Caco-2 (cell line): ENCODE measurements at regions of chr3 and their contacts with region 1.

Region 1: DNA sequence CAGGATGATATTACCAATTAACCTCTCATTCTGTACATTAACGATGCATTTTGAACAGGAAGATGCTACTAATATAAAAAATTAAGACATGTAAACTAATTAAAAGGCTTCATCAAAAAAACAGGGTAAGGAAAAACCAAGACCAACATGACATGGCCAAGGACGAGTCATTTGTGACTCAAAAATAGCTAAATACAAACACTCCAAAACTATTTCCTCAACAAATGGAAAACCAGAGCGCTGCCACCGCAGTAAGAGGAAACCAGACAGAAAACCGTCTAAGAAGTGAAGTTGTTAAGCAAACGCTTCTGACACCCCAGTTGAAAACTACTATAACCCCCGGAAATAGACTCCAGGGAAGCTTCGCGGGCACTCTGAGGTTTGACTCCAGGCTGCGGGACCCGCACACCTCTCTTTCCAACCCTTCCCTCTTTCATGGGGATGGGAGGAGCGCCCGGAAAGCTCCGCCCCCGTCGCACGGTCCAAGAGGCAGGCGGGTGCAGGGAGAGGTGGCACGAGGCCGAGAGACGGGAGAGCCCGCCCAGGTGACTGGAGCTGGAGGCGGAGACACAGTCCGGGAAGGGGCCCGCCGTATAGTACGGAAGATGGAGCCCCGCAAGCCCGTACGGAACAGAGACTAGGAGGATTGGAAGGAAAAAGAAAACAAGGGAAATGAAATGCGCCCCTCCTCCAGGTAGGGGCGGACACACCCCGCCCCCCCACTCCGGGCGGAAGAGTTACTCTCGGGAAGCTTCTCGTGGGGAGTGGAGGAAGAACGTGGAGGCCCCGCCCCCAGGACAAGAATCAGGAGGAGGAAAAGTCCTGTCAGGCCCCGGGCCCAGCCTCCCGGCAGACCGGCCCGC is 708 bp downstream of the DCAF1 start:
- DNase-seq: peak; percentile 96 to 97
- H3K4me3 ChIP-seq: peak overlapping the region; percentile 50
- H3K4me3 Mint-ChIP-seq: peak overlapping the region; percentile 93
- H3K27ac Mint-ChIP-seq: peak overlapping the region; percentile 97
- H3K4me1 ChIP-seq: no peaks in the 10 kb centered on the region
- H3K4me1 Mint-ChIP-seq: peaks cover 8% of the 10 kb centered on the region
- H3K27me3 ChIP-seq: no peaks in the 10 kb centered on the region
- H3K27me3 Mint-ChIP-seq: no peaks in the 10 kb centered on the region
- CTCF ChIP-seq: no peak

Region 2: GRCh38 chr3:50211930-50212329 is 1287.2 kb before region 1 on chr3:
- CTCF ChIA-PET with region 1: no interaction called
- POLR2A ChIA-PET with region 1: interaction called, 11 read pairs
- intact Hi-C with region 1: no loop called
- DNase-seq: no peak
- H3K4me3 ChIP-seq: no peak overlapping the region
- H3K4me3 Mint-ChIP-seq: no peak overlapping the region
- H3K27ac Mint-ChIP-seq: no peak overlapping the region
- H3K4me1 ChIP-seq: peaks cover 22% of the 10 kb centered on the region
- H3K4me1 Mint-ChIP-seq: peaks cover 12% of the 10 kb centered on the region
- H3K27me3 ChIP-seq: no peaks in the 10 kb centered on the region
- H3K27me3 Mint-ChIP-seq: no peaks in the 10 kb centered on the region
- CTCF ChIP-seq: no peak

Region 3: DNA sequence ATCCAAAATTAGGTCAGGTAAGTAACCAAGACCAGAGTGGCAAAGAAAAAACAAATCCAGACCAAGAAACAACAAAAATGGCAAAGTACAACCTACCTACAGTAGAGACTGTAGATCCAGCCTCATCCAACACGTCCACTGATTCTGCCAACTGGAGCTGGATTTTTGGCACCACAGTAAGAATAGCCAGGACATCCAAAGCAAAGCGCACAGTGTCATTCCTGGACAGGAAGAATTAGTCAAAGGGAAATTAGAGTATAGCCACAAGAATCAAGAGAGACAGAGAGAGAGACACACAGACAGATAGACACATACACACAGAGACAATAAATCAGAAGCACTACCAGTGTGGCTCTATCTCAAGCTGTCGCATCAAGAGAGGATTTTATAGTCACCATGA is 76.9 kb before region 1 on chr3:
- CTCF ChIA-PET with region 1: no interaction called
- POLR2A ChIA-PET with region 1: no interaction called
- intact Hi-C with region 1: no loop called
- DNase-seq: no peak
- H3K4me3 ChIP-seq: no peak overlapping the region
- H3K4me3 Mint-ChIP-seq: no peak overlapping the region
- H3K27ac Mint-ChIP-seq: no peak overlapping the region
- H3K4me1 ChIP-seq: no peaks in the 10 kb centered on the region
- H3K4me1 Mint-ChIP-seq: no peaks in the 10 kb centered on the region
- H3K27me3 ChIP-seq: no peaks in the 10 kb centered on the region
- H3K27me3 Mint-ChIP-seq: no peaks in the 10 kb centered on the region
- CTCF ChIP-seq: no peak

Region 4: DNA sequence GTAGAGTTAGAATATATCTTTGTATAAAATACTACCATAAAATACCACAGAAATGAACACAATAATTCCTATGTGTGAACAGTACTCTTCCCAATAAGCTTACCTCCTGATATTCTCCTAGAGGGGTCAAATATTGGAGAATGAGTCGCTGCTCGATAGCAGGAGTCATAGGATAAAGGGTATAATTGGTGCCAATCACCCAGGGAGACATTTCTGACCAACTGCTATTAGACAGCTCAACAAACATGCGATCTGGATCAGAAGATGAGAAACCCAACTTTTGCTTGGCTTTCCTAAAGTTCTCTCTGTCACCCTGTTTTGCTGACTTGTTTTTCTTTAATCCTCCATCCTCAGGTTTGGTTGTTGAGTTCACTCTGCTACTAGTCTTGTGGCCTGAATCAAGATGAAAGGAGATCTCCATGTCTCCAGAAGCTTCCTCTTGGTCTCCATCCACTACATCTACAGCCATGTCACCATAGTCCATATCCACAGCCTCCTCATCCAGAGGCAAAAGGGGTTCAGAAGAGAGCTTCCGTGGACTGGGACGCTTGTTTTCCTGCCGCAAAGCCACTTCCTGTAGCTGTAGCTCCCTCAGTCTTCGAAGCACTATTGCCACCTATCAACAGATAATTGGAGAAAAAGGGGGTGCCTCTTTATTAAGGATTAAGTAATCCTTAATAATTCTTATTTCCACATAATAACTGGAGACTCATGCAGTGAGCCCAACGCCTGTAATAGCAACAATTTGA is 57.7 kb before region 1 on chr3:
- CTCF ChIA-PET with region 1: no interaction called
- POLR2A ChIA-PET with region 1: interaction called, 10 read pairs
- intact Hi-C with region 1: no loop called
- DNase-seq: no peak
- H3K4me3 ChIP-seq: no peak overlapping the region
- H3K4me3 Mint-ChIP-seq: no peak overlapping the region
- H3K27ac Mint-ChIP-seq: no peak overlapping the region
- H3K4me1 ChIP-seq: no peaks in the 10 kb centered on the region
- H3K4me1 Mint-ChIP-seq: no peaks in the 10 kb centered on the region
- H3K27me3 ChIP-seq: no peaks in the 10 kb centered on the region
- H3K27me3 Mint-ChIP-seq: no peaks in the 10 kb centered on the region
- CTCF ChIP-seq: no peak

Region 5: DNA sequence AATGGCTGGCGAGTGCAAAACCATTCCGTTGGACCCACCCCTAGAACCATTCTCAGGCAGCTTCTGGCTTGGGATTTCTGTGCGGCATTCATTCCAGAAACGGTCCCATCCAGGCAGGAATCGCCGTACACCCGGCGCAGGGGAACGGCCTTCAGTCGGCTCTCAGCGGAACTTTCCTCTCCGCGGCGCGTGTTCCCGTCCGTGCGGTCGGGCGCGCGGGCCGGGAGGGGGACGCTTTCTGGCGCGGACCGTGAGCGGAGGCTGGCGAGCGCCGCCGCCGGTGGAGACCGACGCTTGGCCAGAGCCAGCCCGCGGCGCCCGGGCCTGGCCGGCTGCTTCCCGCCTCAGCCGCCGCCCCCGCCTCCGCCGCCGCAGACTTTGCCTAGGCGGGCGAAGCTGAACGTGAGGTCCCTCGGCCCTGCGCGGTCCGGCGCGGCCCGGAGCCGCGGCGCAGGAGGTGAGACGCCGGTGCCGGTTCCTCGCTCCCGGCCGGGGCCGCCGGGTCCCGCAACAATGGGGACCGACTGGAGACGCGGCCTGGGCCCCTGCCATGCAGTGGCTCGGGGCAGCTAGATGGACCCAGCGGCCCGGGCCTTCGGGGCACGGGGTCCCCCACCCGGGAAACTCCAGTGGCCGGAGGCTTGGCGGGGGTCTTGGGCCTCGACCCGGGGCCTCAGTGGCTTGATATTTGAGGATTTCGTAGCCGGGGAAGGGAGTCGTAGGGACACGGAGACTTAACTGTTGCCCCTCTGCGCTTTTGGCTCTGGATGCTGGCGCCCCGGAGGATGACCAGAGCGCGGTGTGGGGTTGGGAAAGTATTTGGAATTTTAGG is 39.6 kb after region 1 on chr3 and contains the start of gene RAD54L2:
- CTCF ChIA-PET with region 1: interaction called, 6 read pairs
- POLR2A ChIA-PET with region 1: interaction called, 27 read pairs
- intact Hi-C with region 1: loop called (anchors 1 kb)
- DNase-seq: peak; percentile 86 to 91
- H3K4me3 ChIP-seq: peak within 1 kb of the TSS; percentile 91
- H3K4me3 Mint-ChIP-seq: peak within 1 kb of the TSS; percentile 84
- H3K27ac Mint-ChIP-seq: peak within 1 kb of the TSS; percentile 82
- H3K4me1 ChIP-seq: peaks cover 9% of the 10 kb centered on the region
- H3K4me1 Mint-ChIP-seq: peaks cover 34% of the 10 kb centered on the region
- H3K27me3 ChIP-seq: no peaks in the 10 kb centered on the region
- H3K27me3 Mint-ChIP-seq: no peaks in the 10 kb centered on the region
- CTCF ChIP-seq: no peak
- total RNA-seq, gene RAD54L2: 34.0 and 36.5 TPM in 2 replicates

Region 6: GRCh38 chr3:51637941-51638471 is 138.9 kb after region 1 on chr3:
- CTCF ChIA-PET with region 1: interaction called, 12 read pairs
- POLR2A ChIA-PET with region 1: interaction called, 8 read pairs
- intact Hi-C with region 1: loop called (anchors 1 kb)
- DNase-seq: peak; percentile 73 to 75
- H3K4me3 ChIP-seq: no peak overlapping the region
- H3K4me3 Mint-ChIP-seq: no peak overlapping the region
- H3K27ac Mint-ChIP-seq: no peak overlapping the region
- H3K4me1 ChIP-seq: peaks cover 10% of the 10 kb centered on the region
- H3K4me1 Mint-ChIP-seq: no peaks in the 10 kb centered on the region
- H3K27me3 ChIP-seq: no peaks in the 10 kb centered on the region
- H3K27me3 Mint-ChIP-seq: no peaks in the 10 kb centered on the region
- CTCF ChIP-seq: peak; percentile 96 to 98

Region 7: GRCh38 chr3:51691949-51692348 is 192.8 kb after region 1 on chr3:
- CTCF ChIA-PET with region 1: no interaction called
- POLR2A ChIA-PET with region 1: interaction called, 13 read pairs
- intact Hi-C with region 1: no loop called
- DNase-seq: no peak
- H3K4me3 ChIP-seq: no peak overlapping the region
- H3K4me3 Mint-ChIP-seq: no peak overlapping the region
- H3K27ac Mint-ChIP-seq: no peak overlapping the region
- H3K4me1 ChIP-seq: no peaks in the 10 kb centered on the region
- H3K4me1 Mint-ChIP-seq: no peaks in the 10 kb centered on the region
- H3K27me3 ChIP-seq: no peaks in the 10 kb centered on the region
- H3K27me3 Mint-ChIP-seq: no peaks in the 10 kb centered on the region
- CTCF ChIP-seq: no peak

Region 8: DNA sequence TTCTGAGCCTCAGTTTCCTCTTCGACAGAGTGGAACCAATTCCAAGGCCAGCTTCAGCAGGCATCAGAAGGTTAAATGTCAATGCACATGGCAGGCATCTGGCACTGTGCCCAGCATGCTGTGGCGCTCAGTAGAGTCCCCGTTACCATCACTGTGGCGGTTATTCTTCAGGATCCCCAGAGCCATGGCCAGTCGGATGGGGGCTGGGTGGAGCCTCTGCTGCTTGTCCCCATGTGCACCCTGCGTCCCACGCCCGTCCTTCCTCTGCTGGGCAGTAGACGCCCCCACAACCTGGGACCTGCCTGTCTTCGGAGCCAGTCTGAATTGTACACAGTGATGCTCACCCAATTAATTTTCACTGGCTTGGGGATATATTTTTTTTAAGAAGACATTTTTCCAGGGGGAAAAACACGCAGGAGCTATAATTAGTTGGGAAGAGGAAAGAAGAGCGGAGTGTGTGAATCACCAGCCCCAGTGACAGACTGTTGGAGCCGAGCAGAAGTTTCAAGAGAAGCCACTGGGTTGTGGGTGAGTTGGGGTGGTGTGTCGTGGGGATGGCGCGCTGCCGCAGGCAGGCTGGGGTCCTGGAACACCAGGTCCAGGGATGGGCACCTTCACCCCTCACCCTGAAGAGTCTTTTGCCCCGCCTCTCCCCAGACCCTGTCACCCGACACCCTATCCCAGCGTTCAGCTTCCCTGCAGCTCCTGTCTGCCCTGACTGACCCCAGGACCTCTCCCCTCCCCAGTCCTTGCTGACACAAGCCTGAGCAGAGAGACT is 523.4 kb after region 1 on chr3:
- CTCF ChIA-PET with region 1: no interaction called
- POLR2A ChIA-PET with region 1: interaction called, 19 read pairs
- intact Hi-C with region 1: no loop called
- DNase-seq: no peak
- H3K4me3 ChIP-seq: no peak overlapping the region
- H3K4me3 Mint-ChIP-seq: no peak overlapping the region
- H3K27ac Mint-ChIP-seq: no peak overlapping the region
- H3K4me1 ChIP-seq: no peaks in the 10 kb centered on the region
- H3K4me1 Mint-ChIP-seq: no peaks in the 10 kb centered on the region
- H3K27me3 ChIP-seq: no peaks in the 10 kb centered on the region
- H3K27me3 Mint-ChIP-seq: no peaks in the 10 kb centered on the region
- CTCF ChIP-seq: no peak